ENCODE measurements at regions of chr1 and their contacts with region 1.

Region 1: GRCh38 chr1:54774820-54775498 is 10.6 kb upstream of the PARS2 start:
- DNase-seq: no peak
- ATAC-seq: no peak
- H3K4me3 ChIP-seq: no peak overlapping the region
- H3K27ac ChIP-seq: no peak overlapping the region
- H3K4me1 ChIP-seq: no peaks in the 10 kb centered on the region
- H3K27me3 ChIP-seq: peaks cover 0 to 11% (median 0%) of the 10 kb centered on the region in 7 donors
- CTCF ChIP-seq: no peak

Region 2: GRCh38 chr1:53938136-53938830 is 836.7 kb before region 1 on chr1:
- intact Hi-C with region 1: loop called in 1 of 10 experiments (anchors 5 kb)
- DNase-seq: no peak
- ATAC-seq: no peak
- H3K4me3 ChIP-seq: no peak overlapping the region
- H3K27ac ChIP-seq: no peak overlapping the region
- H3K4me1 ChIP-seq: peaks cover 0 to 27% (median 0%) of the 10 kb centered on the region in 9 donors
- H3K27me3 ChIP-seq: no peaks in the 10 kb centered on the region
- CTCF ChIP-seq: no peak